Mammary epithelial cell (primary cell): ENCODE measurements at regions of chr12 and their contacts with region 1.

Region 1: GRCh38 chr12:95412482-95413311 is 61.3 kb upstream of the METAP2 start:
- DNase-seq: peak; percentile 79
- H3K4me3 ChIP-seq: no peak overlapping the region
- H3K27ac ChIP-seq: no peak overlapping the region
- H3K4me1 ChIP-seq: no peaks in the 10 kb centered on the region
- H3K27me3 ChIP-seq: no peaks in the 10 kb centered on the region
- CTCF ChIP-seq: no peak

Region 2: DNA sequence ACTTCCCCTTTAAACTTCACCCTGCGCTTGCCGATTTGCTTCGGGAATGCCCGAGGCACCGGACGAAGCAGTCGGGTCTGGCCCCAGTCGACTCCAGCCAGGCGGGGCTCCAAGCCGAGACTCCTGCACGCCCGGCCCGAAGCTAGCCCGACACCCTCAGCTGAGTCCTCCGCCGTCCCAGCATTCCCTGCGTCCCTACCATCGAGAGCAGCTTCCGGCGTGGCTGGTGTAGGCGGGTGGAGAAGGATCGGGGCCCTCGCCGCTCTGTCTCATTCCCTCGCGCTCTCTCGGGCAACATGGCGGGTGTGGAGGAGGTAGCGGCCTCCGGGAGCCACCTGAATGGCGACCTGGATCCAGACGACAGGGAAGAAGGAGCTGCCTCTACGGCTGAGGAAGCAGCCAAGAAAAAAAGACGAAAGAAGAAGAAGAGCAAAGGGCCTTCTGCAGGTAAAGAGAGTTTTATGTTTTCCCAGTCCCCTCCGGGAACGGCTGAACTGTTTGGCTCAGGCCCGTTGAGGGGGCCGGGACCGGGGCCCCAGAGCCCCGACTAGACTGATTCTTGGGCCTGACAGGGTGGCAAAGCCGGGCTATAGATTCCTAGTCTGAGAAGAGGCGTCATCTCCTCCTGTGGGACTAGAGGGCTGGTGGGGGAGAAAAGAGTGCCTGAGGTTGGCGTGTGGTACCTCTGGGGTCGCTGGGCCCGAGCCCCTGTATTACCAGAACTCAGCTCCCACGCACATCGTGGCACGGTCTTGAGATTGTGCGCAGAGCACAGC is 61.4 kb after region 1 on chr12 and contains the start of gene METAP2:
- CTCF ChIA-PET with region 1: no interaction called
- dilution Hi-C with region 1: no loop called
- in situ Hi-C with region 1: no loop called
- intact Hi-C with region 1: loop called (anchors 2 kb)
- DNase-seq: peak; percentile 98
- H3K4me3 ChIP-seq: peak within 1 kb of the TSS; percentile 69 to 99 (median 89)
- H3K27ac ChIP-seq: peak within 1 kb of the TSS; percentile 93
- H3K4me1 ChIP-seq: peaks cover 5% of the 10 kb centered on the region
- H3K27me3 ChIP-seq: no peaks in the 10 kb centered on the region
- CTCF ChIP-seq: no peak
- total RNA-seq, gene METAP2: 42.0 to 89.8 TPM